Activated CD4-positive, alpha-beta memory T cell treated with anti-CD3 and anti-CD28 coated beads, Interleukin-2, amount 10 ng/mL, durations not matched to agents 7 days and 5 days (primary cell): ENCODE measurements at regions of chr15 and their contacts with region 1.

Region 1: GRCh38 chr15:41283653-41284426 is 48.6 kb downstream of the OIP5 start:
- DNase-seq: peak; percentile 98
- H3K4me3 Mint-ChIP-seq: peak overlapping the region; percentile 93
- H3K27ac Mint-ChIP-seq: peak overlapping the region; percentile 98
- H3K4me1 Mint-ChIP-seq: peaks cover 51% of the 10 kb centered on the region
- H3K27me3 Mint-ChIP-seq: no peaks in the 10 kb centered on the region

Region 2: GRCh38 chr15:41230650-41231533 is 52.9 kb before region 1 on chr15 and contains the starts of genes CHP1 and EXD1:
- CTCF ChIA-PET with region 1: interaction called, 8 read pairs
- POLR2A ChIA-PET with region 1: interaction called, 22 read pairs
- DNase-seq: peak; percentile 97
- H3K4me3 Mint-ChIP-seq: peak within 1 kb of the TSS; percentile 84
- H3K27ac Mint-ChIP-seq: peak within 1 kb of the TSS; percentile 72
- H3K4me1 Mint-ChIP-seq: peaks cover 31% of the 10 kb centered on the region
- H3K27me3 Mint-ChIP-seq: peaks cover 5% of the 10 kb centered on the region
- total RNA-seq, gene CHP1: 60.1 to 68.9 TPM
- total RNA-seq, gene EXD1: not detected

Region 3: GRCh38 chr15:41501191-41501917 is 217.5 kb after region 1 on chr15:
- CTCF ChIA-PET with region 1: no interaction called
- POLR2A ChIA-PET with region 1: no interaction called
- DNase-seq: peak; percentile 47
- H3K4me3 Mint-ChIP-seq: peak overlapping the region; percentile 54
- H3K27ac Mint-ChIP-seq: no peak overlapping the region
- H3K4me1 Mint-ChIP-seq: peaks cover 20% of the 10 kb centered on the region
- H3K27me3 Mint-ChIP-seq: peaks cover 79% of the 10 kb centered on the region